CD4-positive, alpha-beta memory T cell (primary cell): ENCODE measurements at regions of chr15 and their contacts with region 1.

Region 1: DNA sequence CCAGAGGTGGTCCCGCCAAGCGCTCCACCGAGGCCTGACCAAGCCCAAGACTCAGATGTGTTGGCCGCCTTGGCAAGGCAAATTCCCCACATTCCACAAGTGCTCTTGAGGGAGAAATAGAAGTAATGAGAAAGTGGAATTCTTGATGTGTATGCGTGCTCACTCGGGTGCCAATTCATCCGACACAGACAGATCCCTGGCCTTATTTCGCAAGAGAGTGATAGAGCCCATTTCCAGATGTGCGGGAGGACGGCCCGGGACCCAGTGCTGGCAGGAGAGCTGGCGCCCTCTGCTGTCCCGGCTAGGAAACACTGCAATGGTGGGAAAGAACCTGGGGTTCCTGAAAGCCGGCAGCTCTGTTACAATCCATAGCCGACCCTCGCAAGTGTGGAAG is 76.0 kb downstream of the HMG20A start:
- DNase-seq: peak; percentile 51 to 66 (median 60)
- H3K4me3 ChIP-seq: no peak overlapping the region
- H3K4me3 Mint-ChIP-seq: no peak overlapping the region
- H3K27ac ChIP-seq: no peak overlapping the region
- H3K27ac Mint-ChIP-seq: peak overlapping the region in 1 of 7 donors; percentile 31
- H3K4me1 ChIP-seq: peaks cover 9% of the 10 kb centered on the region
- H3K4me1 Mint-ChIP-seq: peaks cover 9 to 17% (median 16%) of the 10 kb centered on the region in 4 donors
- H3K27me3 ChIP-seq: no peaks in the 10 kb centered on the region
- H3K27me3 Mint-ChIP-seq: no peaks in the 10 kb centered on the region

Region 2: DNA sequence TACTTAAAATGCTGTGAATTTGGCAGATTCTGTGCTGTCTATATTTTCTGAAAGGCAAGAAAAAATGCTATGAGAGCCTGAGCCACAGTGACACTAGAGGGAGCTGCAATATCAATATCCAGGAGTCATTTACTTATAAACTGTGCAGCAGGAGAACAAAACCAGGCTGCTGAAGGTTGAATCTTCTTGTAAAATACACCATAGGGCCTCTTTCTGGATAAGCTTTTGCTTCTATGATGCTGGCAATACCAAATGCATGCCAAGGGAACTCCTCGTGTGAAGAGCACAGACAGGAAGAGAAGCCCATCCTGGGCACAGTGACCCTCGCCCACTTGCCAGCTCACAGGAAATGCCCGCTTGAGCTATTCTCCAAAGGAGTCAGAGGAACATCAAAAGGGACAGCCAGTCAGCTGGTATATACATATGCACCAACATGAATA is 377.8 kb before region 1 on chr15:
- CTCF ChIA-PET with region 1: interaction called, 63 read pairs
- POLR2A ChIA-PET with region 1: no interaction called
- intact Hi-C with region 1: loop called (anchors 1 kb)
- DNase-seq: peak in 4 of 5 donors; percentile 42 to 48 (median 44)
- H3K4me3 ChIP-seq: no peak overlapping the region
- H3K4me3 Mint-ChIP-seq: no peak overlapping the region
- H3K27ac ChIP-seq: no peak overlapping the region
- H3K27ac Mint-ChIP-seq: no peak overlapping the region
- H3K4me1 ChIP-seq: no peaks in the 10 kb centered on the region
- H3K4me1 Mint-ChIP-seq: peaks cover 0 to 3% (median 2%) of the 10 kb centered on the region in 4 donors
- H3K27me3 ChIP-seq: no peaks in the 10 kb centered on the region
- H3K27me3 Mint-ChIP-seq: no peaks in the 10 kb centered on the region

Region 3: GRCh38 chr15:77186594-77187011 is 310.1 kb before region 1 on chr15:
- CTCF ChIA-PET with region 1: interaction called, 7 read pairs
- POLR2A ChIA-PET with region 1: no interaction called
- intact Hi-C with region 1: loop called (anchors 10 kb)
- DNase-seq: peak in 1 of 5 donors; percentile 21
- H3K4me3 ChIP-seq: no peak overlapping the region
- H3K4me3 Mint-ChIP-seq: no peak overlapping the region
- H3K27ac ChIP-seq: no peak overlapping the region
- H3K27ac Mint-ChIP-seq: peak overlapping the region in 1 of 7 donors; percentile 20
- H3K4me1 ChIP-seq: peaks cover 12% of the 10 kb centered on the region
- H3K4me1 Mint-ChIP-seq: peaks cover 12 to 19% (median 15%) of the 10 kb centered on the region in 4 donors
- H3K27me3 ChIP-seq: no peaks in the 10 kb centered on the region
- H3K27me3 Mint-ChIP-seq: no peaks in the 10 kb centered on the region

Region 4: GRCh38 chr15:77347208-77347607 is 149.5 kb before region 1 on chr15:
- CTCF ChIA-PET with region 1: no interaction called
- POLR2A ChIA-PET with region 1: no interaction called
- intact Hi-C with region 1: no loop called
- DNase-seq: no peak
- H3K4me3 ChIP-seq: no peak overlapping the region
- H3K4me3 Mint-ChIP-seq: no peak overlapping the region
- H3K27ac ChIP-seq: no peak overlapping the region
- H3K27ac Mint-ChIP-seq: no peak overlapping the region
- H3K4me1 ChIP-seq: no peaks in the 10 kb centered on the region
- H3K4me1 Mint-ChIP-seq: no peaks in the 10 kb centered on the region
- H3K27me3 ChIP-seq: no peaks in the 10 kb centered on the region
- H3K27me3 Mint-ChIP-seq: no peaks in the 10 kb centered on the region

Region 5: GRCh38 chr15:77526791-77527778 is 30.4 kb after region 1 on chr15:
- CTCF ChIA-PET with region 1: no interaction called
- POLR2A ChIA-PET with region 1: no interaction called
- intact Hi-C with region 1: no loop called
- DNase-seq: no peak
- H3K4me3 ChIP-seq: no peak overlapping the region
- H3K4me3 Mint-ChIP-seq: no peak overlapping the region
- H3K27ac ChIP-seq: no peak overlapping the region
- H3K27ac Mint-ChIP-seq: no peak overlapping the region
- H3K4me1 ChIP-seq: no peaks in the 10 kb centered on the region
- H3K4me1 Mint-ChIP-seq: no peaks in the 10 kb centered on the region
- H3K27me3 ChIP-seq: no peaks in the 10 kb centered on the region
- H3K27me3 Mint-ChIP-seq: peaks cover 0 to under 1% of the 10 kb centered on the region in 2 donors